ENCODE measurements at regions of chr5 and their contacts with region 1.

Region 1: DNA sequence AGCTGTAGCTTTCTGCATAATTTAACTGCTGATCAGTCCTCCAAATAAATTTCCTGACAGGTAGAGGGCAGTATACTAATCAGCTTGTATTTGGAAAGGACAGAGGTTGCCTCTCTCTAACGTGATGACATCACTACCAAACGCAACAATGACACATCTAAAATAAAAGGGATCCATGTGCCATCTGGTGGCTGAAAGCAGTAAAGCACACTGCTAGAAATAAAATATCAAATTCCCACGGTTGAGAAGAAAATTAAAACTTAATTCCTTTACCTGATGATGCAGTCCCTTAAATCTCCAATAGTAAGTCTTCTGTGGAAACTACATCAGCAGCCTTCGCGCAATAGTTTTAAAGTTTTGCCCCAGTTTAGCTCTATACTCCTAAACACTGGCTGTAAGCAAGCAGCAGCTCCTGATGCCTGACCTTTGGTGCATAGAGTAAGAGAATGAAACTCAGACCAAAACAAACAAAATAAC is 54.5 kb downstream of the DIAPH1 start:
- DNase-seq: peak; percentile 82
- ATAC-seq: peak; percentile 96
- H3K4me3 Mint-ChIP-seq: no peak overlapping the region
- H3K27ac Mint-ChIP-seq: peak overlapping the region; percentile 89
- H3K4me1 Mint-ChIP-seq: peaks cover 26% of the 10 kb centered on the region
- H3K27me3 Mint-ChIP-seq: no peaks in the 10 kb centered on the region
- CTCF ChIP-seq: peak; percentile 95

Region 2: DNA sequence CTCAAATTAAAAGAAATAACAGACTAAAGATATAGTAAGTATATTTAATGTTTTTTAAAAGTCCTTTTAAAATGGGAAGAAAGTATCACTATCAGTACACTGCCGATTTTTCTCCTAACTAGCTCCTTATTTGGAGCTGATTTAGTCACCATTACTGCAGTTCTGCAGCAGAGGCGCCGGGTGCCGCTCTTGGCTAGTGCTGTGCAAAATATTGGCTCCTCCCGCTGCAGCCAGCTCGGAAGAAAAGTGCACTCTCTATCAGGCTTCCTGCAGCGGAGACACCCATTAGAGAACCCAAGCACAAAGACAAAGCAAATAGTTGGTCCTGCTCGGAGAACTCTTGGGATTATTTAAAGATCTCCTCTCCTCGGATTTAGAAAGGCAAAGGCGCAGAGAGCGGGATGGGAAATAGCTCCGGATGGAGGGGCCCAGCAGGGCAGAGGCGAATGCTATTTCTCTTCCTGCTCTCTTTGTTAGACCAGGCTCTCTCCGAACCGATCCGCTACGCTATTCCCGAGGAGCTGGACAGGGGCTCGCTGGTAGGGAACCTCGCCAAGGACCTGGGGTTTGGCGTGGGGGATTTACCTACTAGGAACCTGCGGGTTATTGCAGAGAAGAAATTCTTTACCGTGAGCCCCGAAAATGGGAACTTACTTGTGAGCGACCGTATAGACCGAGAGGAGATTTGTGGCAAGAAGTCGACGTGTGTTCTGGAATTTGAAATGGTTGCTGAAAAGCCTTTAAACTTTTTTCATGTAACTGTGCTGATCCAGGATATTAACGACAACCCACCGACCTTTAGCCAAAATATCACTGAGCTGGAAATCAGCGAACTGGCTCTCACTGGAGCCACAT is 194.0 kb before region 1 on chr5 and contains the start of gene PCDHGB3:
- CTCF ChIA-PET with region 1: interaction called, 13 read pairs
- POLR2A ChIA-PET with region 1: no interaction called
- intact Hi-C with region 1: no loop called
- DNase-seq: peak; percentile 48
- ATAC-seq: peak; percentile 74
- H3K4me3 Mint-ChIP-seq: peak within 1 kb of the TSS; percentile 58
- H3K27ac Mint-ChIP-seq: no peak within 1 kb of the TSS
- H3K4me1 Mint-ChIP-seq: peaks cover 2% of the 10 kb centered on the region
- H3K27me3 Mint-ChIP-seq: peaks cover 67% of the 10 kb centered on the region
- CTCF ChIP-seq: peak; percentile 27
- total RNA-seq, gene PCDHGB3: 0.07 to 0.16 TPM

Region 3: DNA sequence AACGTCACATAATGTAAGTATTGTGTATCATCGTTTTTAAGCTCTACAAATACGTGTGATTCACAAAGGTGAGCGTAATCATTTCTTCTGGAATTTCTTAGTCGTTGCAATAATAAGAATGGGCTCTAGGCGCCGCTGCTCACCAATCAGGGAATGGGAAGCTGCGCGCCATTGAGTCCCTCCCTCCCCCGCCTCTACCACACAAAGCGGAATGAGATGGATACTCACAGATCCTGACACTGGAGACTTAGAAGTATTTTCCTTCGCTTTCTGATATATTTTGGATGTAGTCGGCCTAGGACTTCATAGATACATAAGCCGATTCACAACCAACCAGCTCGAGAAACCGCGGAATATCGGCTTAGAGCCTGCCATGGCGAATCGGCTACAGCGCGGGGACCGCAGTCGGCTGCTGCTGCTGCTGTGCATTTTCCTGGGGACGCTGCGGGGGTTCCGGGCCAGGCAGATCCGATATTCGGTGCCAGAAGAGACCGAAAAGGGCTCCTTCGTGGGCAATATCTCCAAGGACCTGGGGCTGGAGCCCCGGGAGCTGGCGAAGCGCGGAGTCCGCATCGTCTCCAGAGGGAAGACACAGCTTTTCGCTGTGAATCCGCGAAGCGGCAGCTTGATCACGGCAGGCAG is 143.3 kb before region 1 on chr5 and contains the start of gene PCDHGA11:
- CTCF ChIA-PET with region 1: interaction called, 27 read pairs
- POLR2A ChIA-PET with region 1: no interaction called
- intact Hi-C with region 1: no loop called
- DNase-seq: peak; percentile 69
- ATAC-seq: peak; percentile 61
- H3K4me3 Mint-ChIP-seq: peak within 1 kb of the TSS; percentile 74
- H3K27ac Mint-ChIP-seq: no peak within 1 kb of the TSS
- H3K4me1 Mint-ChIP-seq: peaks cover 8% of the 10 kb centered on the region
- H3K27me3 Mint-ChIP-seq: peaks cover 72% of the 10 kb centered on the region
- CTCF ChIP-seq: peak; percentile 76
- total RNA-seq, gene PCDHGA11: not detected

Region 4: DNA sequence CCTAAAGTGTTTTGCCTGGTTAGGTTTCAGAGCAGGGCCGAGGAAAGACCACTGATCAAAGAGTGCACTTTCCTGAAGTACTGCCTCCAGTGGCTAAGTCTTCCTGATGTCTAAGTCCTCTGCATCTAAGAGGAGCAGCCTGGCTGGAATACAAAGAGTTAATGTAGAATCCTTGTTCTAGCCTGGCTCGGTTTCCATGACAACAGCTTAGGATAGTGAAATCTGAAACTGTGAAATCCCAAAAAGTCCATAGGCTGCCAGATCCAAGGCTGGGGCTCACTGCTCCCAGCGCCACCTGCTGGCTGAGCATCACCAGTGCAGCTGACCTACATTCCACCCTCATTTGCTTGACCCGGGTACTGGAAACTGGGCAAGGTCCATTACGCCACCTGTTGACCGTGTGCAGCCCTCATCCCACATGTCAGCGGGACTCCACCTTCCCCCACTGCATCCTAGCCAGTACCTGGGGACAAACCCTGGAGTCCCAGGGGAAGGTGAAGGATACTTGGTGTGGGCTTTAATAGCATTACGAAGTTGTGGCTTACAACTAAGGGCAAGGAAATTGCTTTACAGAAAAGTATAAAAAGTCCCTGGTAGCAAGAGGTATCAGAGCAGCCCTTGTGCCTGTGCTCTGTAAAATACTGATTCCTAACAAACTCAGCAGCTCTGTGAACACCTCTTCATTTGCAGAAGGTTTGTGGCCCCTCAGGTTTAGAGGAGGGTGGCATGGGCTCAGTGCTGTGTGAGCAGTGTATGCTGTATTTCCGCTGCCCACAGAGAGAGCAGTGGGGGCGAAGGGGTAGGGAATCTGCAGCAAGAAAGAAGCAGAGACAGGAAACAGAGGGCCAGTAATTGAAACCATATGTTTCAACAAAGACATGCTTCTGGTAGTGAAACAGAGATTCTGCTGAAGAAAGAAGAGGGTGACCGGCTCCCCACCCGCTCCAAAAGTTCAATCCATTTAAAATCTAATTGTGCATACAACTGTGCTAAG is 39.4 kb before region 1 on chr5:
- CTCF ChIA-PET with region 1: interaction called, 16 read pairs
- POLR2A ChIA-PET with region 1: interaction called, 3 read pairs
- intact Hi-C with region 1: no loop called
- DNase-seq: peak; percentile 54
- ATAC-seq: peak; percentile 72
- H3K4me3 Mint-ChIP-seq: no peak overlapping the region
- H3K27ac Mint-ChIP-seq: peak overlapping the region; percentile 56
- H3K4me1 Mint-ChIP-seq: peaks cover 44% of the 10 kb centered on the region
- H3K27me3 Mint-ChIP-seq: no peaks in the 10 kb centered on the region
- CTCF ChIP-seq: peak; percentile 99

Region 5: GRCh38 chr5:141590127-141590526 is 25.9 kb after region 1 on chr5:
- CTCF ChIA-PET with region 1: interaction called, 24 read pairs
- POLR2A ChIA-PET with region 1: no interaction called
- intact Hi-C with region 1: no loop called
- DNase-seq: no peak
- ATAC-seq: no peak
- H3K4me3 Mint-ChIP-seq: no peak overlapping the region
- H3K27ac Mint-ChIP-seq: no peak overlapping the region
- H3K4me1 Mint-ChIP-seq: peaks cover 43% of the 10 kb centered on the region
- H3K27me3 Mint-ChIP-seq: no peaks in the 10 kb centered on the region
- CTCF ChIP-seq: no peak

Region 6: GRCh38 chr5:141636413-141637122 is 72.3 kb after region 1 on chr5 and contains the starts of genes HDAC3 and RELL2:
- CTCF ChIA-PET with region 1: interaction called, 24 read pairs
- POLR2A ChIA-PET with region 1: no interaction called
- intact Hi-C with region 1: no loop called
- DNase-seq: peak; percentile 94
- ATAC-seq: peak; percentile 88
- H3K4me3 Mint-ChIP-seq: peak within 1 kb of the TSS; percentile 86
- H3K27ac Mint-ChIP-seq: peak within 1 kb of the TSS; percentile 90
- H3K4me1 Mint-ChIP-seq: peaks cover 47% of the 10 kb centered on the region
- H3K27me3 Mint-ChIP-seq: no peaks in the 10 kb centered on the region
- CTCF ChIP-seq: no peak
- total RNA-seq, gene HDAC3: 94.8 to 98.3 TPM
- total RNA-seq, gene RELL2: 31.4 to 35.6 TPM

Region 7: GRCh38 chr5:141681695-141682641 is 117.7 kb after region 1 on chr5 and contains the start of gene ARAP3:
- CTCF ChIA-PET with region 1: no interaction called
- POLR2A ChIA-PET with region 1: no interaction called
- intact Hi-C with region 1: no loop called
- DNase-seq: peak; percentile 54
- ATAC-seq: peak; percentile 73
- H3K4me3 Mint-ChIP-seq: peak within 1 kb of the TSS; percentile 72
- H3K27ac Mint-ChIP-seq: peak within 1 kb of the TSS; percentile 68
- H3K4me1 Mint-ChIP-seq: peaks cover 24% of the 10 kb centered on the region
- H3K27me3 Mint-ChIP-seq: no peaks in the 10 kb centered on the region
- CTCF ChIP-seq: no peak
- total RNA-seq, gene ARAP3: 5.9 to 7.2 TPM

Region 8: DNA sequence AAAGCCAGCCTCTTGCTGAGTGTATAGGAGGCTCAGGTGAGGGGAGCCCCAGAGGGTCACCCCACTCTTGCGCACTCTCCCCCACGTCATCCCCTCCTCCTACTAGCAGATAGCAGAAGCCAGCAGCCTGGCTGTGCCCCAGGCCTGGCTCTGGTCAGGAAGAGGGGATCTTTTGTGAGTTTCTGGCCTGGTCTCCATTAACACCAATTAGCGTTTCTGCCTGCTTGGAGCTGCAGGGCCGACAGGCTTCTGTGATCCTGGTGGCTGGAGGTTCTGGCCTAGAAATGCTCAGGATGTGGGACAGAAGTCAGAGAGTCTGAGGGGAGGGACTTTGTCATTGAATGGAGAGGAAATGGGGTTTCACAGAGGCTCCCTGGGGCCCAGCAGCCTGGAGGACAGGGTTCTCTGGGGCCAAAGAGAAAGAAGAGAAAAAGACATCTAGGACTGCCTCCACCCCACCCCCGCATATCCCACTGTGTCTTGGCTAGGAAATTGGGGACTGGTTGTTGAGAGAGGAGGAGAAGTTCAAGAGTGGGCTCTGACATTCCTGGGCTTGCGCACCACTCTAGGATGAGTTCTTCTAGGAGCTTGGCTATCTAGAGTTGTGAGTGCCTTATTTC is 165.2 kb after region 1 on chr5:
- CTCF ChIA-PET with region 1: no interaction called
- POLR2A ChIA-PET with region 1: no interaction called
- intact Hi-C with region 1: no loop called
- DNase-seq: no peak
- ATAC-seq: no peak
- H3K4me3 Mint-ChIP-seq: no peak overlapping the region
- H3K27ac Mint-ChIP-seq: no peak overlapping the region
- H3K4me1 Mint-ChIP-seq: no peaks in the 10 kb centered on the region
- H3K27me3 Mint-ChIP-seq: peaks cover 2% of the 10 kb centered on the region
- CTCF ChIP-seq: no peak